H1 (cell line): ENCODE measurements at regions of chr3 and their contacts with region 1.

Region 1: GRCh38 chr3:185824476-185825378 is at the start of gene IGF2BP2:
- DNase-seq: peak in 1 of 2 experiments; percentile 79
- H3K4me3 ChIP-seq: peak within 1 kb of the TSS; percentile 87 to 99 (median 88)
- H3K27ac ChIP-seq: peak within 1 kb of the TSS; percentile 78
- H3K4me1 ChIP-seq: peaks cover 3 to 16% (median 10%) of the 10 kb centered on the region in 4 experiments; a peak in 6 of 7 replicates
- H3K27me3 ChIP-seq: peaks cover 0 to 6% (median 4%) of the 10 kb centered on the region in 4 experiments; a peak in 4 of 7 replicates
- CTCF ChIP-seq: peak in 2 of 3 experiments; percentile 6 to 25; a peak in 2 of 4 replicates
- EP300 ChIP-seq: no peak
- POLR2A ChIP-seq: peak; percentile 51 to 81
- RAD21 ChIP-seq: peak in 1 of 2 experiments; percentile 24; a peak in 1 of 4 replicates
- total RNA-seq, gene IGF2BP2: 114 and 121 TPM in 2 replicates

Region 2: GRCh38 chr3:185764163-185764979 is 60.4 kb before region 1 on chr3:
- CTCF ChIA-PET with region 1: interaction called, 13 read pairs
- POLR2A ChIA-PET with region 1: interaction called, 4 read pairs
- DNase-seq: no peak
- H3K4me3 ChIP-seq: no peak overlapping the region
- H3K27ac ChIP-seq: no peak overlapping the region
- H3K4me1 ChIP-seq: peaks cover 0 to 18% (median 8%) of the 10 kb centered on the region in 4 experiments; a peak in 6 of 7 replicates
- H3K27me3 ChIP-seq: no peaks in the 10 kb centered on the region
- CTCF ChIP-seq: no peak
- EP300 ChIP-seq: no peak
- POLR2A ChIP-seq: no peak
- RAD21 ChIP-seq: no peak

Region 3: DNA sequence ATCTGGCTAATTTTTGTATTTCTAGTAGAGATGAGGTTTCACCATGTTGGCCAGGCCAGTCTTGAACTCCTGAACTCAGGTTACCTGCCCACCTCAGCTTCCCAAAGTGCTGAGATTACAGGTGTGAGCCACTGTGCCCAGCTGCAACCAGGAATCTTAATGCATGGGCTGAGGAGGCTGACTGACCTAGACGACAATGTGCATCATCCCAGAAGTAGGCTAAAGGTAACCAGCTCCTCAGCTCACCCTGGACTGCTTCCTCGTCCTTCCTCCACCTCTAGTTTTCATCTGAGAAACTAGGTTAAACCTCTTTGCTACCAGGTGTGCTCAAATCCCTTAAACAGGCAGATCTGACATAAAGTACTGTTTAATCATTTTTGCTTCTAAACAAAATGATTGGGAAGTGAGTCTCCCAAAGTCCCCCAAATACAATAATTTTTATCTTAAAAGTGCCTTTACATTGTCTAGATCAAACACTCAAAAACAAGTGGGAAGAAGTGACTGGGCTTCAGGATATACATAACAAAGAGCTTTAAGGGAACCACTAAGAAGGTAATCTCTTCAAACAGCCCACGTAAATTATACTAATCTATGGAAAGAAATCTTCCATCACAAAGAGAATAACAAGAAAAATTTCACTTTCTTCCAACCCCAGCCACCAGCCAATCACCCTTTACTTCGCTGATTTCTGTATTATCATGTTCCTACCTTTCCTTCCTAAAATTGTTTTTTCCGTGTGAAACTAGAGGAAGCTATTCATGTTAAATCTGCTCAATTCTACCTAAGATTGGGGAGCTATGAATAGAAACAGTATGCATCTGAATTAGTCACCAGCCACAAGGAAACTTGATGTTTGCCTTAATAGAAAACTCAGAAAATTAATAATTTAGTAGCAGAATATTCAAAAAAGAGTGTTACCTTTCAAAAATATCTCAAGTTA is 34.6 kb before region 1 on chr3:
- CTCF ChIA-PET with region 1: interaction called, 5 read pairs
- POLR2A ChIA-PET with region 1: interaction called, 10 read pairs
- DNase-seq: no peak
- H3K4me3 ChIP-seq: peak overlapping the region in 1 of 4 experiments; percentile 33; a peak in 1 of 8 replicates
- H3K27ac ChIP-seq: no peak overlapping the region
- H3K4me1 ChIP-seq: peaks cover 3 to 37% (median 30%) of the 10 kb centered on the region in 4 experiments; a peak in 6 of 7 replicates
- H3K27me3 ChIP-seq: no peaks in the 10 kb centered on the region
- CTCF ChIP-seq: no peak
- EP300 ChIP-seq: no peak
- POLR2A ChIP-seq: no peak
- RAD21 ChIP-seq: no peak

Region 4: GRCh38 chr3:185813691-185814215 is 11.0 kb before region 1 on chr3:
- CTCF ChIA-PET with region 1: interaction called, 7 read pairs
- POLR2A ChIA-PET with region 1: interaction called, 26 read pairs
- DNase-seq: peak in 1 of 2 experiments; percentile 59
- H3K4me3 ChIP-seq: peak overlapping the region in 2 of 4 experiments; percentile 1 to 46; a peak in 3 of 8 replicates
- H3K27ac ChIP-seq: peak overlapping the region; percentile 55
- H3K4me1 ChIP-seq: peaks cover 10 to 45% (median 23%) of the 10 kb centered on the region in 4 experiments; a peak in 6 of 7 replicates
- H3K27me3 ChIP-seq: no peaks in the 10 kb centered on the region
- CTCF ChIP-seq: no peak
- EP300 ChIP-seq: 0 out of 3 replicates have a peak, but pooled peaks of 1 of the 2 experiments have one; percentile 21
- POLR2A ChIP-seq: 0 out of 3 replicates have a peak, but pooled peaks of 1 of the 2 experiments have one; percentile 50
- RAD21 ChIP-seq: no peak

Region 5: GRCh38 chr3:185912929-185913901 is 88.5 kb after region 1 on chr3:
- CTCF ChIA-PET with region 1: interaction called, 5 read pairs
- POLR2A ChIA-PET with region 1: interaction called, 13 read pairs
- DNase-seq: no peak
- H3K4me3 ChIP-seq: no peak overlapping the region
- H3K27ac ChIP-seq: no peak overlapping the region
- H3K4me1 ChIP-seq: no peaks in the 10 kb centered on the region
- H3K27me3 ChIP-seq: no peaks in the 10 kb centered on the region
- CTCF ChIP-seq: no peak
- EP300 ChIP-seq: no peak
- POLR2A ChIP-seq: peak; percentile 57 to 61
- RAD21 ChIP-seq: no peak

Region 6: GRCh38 chr3:185937689-185938463 is 113.1 kb after region 1 on chr3 and contains the start of gene TRA2B:
- CTCF ChIA-PET with region 1: no interaction called
- POLR2A ChIA-PET with region 1: interaction called, 38 read pairs
- DNase-seq: peak; percentile 96 to 98
- H3K4me3 ChIP-seq: peak within 1 kb of the TSS; percentile 83 to 100 (median 96)
- H3K27ac ChIP-seq: peak within 1 kb of the TSS; percentile 100
- H3K4me1 ChIP-seq: peaks cover 0 to 4% (median 0%) of the 10 kb centered on the region in 4 experiments; a peak in 1 of 7 replicates
- H3K27me3 ChIP-seq: no peaks in the 10 kb centered on the region
- CTCF ChIP-seq: peak; percentile 5 to 41 (median 35); a peak in 2 of 4 replicates
- EP300 ChIP-seq: peak in 1 of 2 experiments; percentile 64; a peak in 1 of 3 replicates
- POLR2A ChIP-seq: peak; percentile 98 to 99
- RAD21 ChIP-seq: no peak
- total RNA-seq, gene TRA2B: 267 and 274 TPM in 2 replicates

Region 7: DNA sequence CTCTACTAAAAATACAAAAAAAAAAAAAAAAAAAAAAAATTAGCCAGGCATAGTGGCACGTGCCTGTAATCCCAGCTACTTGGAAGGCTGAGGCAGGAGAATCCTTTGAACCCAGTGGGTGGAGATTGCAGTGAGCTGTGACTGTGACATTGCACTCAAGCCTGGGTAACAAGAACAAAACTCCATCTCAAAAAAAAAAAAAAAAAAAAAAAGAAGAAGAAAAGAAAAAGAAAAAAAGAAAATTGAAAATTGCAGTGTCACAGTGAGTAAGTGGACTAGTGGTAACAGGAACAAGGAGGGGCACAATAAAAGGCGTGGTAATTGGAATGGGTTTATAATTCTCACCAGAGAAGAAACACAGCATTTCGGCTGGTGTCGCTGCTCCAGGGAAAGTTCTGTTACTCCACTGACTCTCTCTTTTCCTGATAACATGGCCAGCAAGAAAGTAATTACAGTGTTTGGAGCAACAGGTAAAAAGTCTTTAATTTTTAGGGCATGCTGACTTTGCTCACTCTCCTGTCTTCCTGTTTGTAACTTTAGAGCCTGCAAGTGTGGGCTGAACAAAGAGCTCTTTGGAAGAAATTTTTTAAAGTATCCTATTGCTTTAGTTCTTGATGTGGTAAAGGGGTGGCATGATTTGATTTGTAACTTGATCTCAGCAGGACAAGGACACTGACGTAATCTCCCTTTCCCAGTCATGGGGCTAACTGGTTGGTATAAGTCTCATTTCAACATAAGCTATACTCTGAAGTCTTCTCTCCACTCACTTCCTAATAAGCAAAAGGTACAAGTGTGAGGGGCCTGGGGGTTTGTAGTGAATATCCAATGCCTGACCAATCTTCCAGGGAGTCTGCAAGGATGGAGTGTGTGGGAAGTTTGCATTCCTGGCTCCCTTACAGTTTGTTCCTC is 135.1 kb after region 1 on chr3:
- CTCF ChIA-PET with region 1: no interaction called
- POLR2A ChIA-PET with region 1: no interaction called
- DNase-seq: no peak
- H3K4me3 ChIP-seq: no peak overlapping the region
- H3K27ac ChIP-seq: no peak overlapping the region
- H3K4me1 ChIP-seq: peaks cover 0 to 4% (median 0%) of the 10 kb centered on the region in 4 experiments; a peak in 1 of 7 replicates
- H3K27me3 ChIP-seq: no peaks in the 10 kb centered on the region
- CTCF ChIP-seq: no peak
- EP300 ChIP-seq: no peak
- POLR2A ChIP-seq: no peak
- RAD21 ChIP-seq: no peak